ENCODE measurements at regions of chr17 and their contacts with region 1.

Region 1: GRCh38 chr17:82022981-82023374 is at the start of gene LRRC45:
- DNase-seq: peak; percentile 100
- ATAC-seq: peak; percentile 95
- H3K4me3 ChIP-seq: peak within 1 kb of the TSS; percentile 69 to 90
- H3K4me3 Mint-ChIP-seq: peak within 1 kb of the TSS; percentile 84
- H3K27ac ChIP-seq: peak within 1 kb of the TSS; percentile 42 to 60
- H3K27ac Mint-ChIP-seq: no peak within 1 kb of the TSS
- H3K4me1 ChIP-seq: peaks cover 31% of the 10 kb centered on the region
- H3K4me1 Mint-ChIP-seq: peaks cover 23% of the 10 kb centered on the region
- H3K27me3 ChIP-seq: no peaks in the 10 kb centered on the region
- H3K27me3 Mint-ChIP-seq: no peaks in the 10 kb centered on the region
- CTCF ChIP-seq: no peak
- total RNA-seq, gene LRRC45: 5.1 to 5.6 TPM

Region 2: DNA sequence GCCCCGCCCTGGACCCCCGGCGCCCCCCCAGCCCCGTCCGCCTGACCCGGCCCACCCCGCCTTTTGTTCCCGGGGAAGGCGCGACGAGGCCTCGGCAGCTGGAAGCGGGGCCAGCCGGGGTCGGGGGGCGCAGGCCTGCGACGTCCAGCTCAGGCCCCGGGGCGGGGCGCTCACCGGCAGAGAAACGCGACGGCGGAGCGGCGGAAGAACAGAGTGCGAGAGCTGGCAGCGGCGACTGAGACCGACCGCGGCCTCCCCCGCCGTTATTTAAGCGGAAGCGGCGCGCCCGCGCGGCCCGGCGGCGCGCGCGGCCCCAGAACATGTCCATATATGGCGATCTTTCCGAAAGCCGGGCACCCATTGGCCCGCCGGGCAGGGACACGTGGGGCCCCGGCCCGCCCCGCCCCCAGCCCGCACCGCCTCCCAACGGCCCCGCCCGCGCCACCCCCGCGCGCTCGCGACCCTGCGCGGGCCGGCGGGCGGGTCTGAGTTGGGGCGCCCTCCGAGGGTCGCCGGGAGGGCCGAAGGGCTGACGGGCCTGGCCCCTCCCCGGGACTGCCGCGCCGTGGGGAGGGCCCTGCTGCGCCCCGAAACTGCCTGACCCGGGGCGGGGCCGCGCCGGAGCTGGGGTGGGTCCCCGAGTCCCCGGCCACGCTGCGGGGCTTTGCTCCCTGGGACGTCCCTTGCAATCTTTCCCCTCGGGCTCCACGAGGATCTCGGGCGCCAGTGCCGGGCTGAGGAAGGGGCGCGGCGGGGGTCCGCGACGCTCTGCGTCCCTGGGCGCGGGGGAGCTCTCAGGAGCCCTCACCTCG is 510.2 kb before region 1 on chr17 and contains the start of gene ACTG1:
- CTCF ChIA-PET with region 1: no interaction called
- POLR2A ChIA-PET with region 1: no interaction called
- intact Hi-C with region 1: loop called in 1 of 2 experiments (anchors 10 kb)
- DNase-seq: peak; percentile 87 to 97 (median 92)
- ATAC-seq: peak; percentile 60
- H3K4me3 ChIP-seq: peak within 1 kb of the TSS; percentile 84 to 93
- H3K4me3 Mint-ChIP-seq: peak within 1 kb of the TSS; percentile 98
- H3K27ac ChIP-seq: peak within 1 kb of the TSS; percentile 56 to 93
- H3K27ac Mint-ChIP-seq: peak within 1 kb of the TSS; percentile 98
- H3K4me1 ChIP-seq: peaks cover 49% of the 10 kb centered on the region
- H3K4me1 Mint-ChIP-seq: peaks cover 57% of the 10 kb centered on the region
- H3K27me3 ChIP-seq: no peaks in the 10 kb centered on the region
- H3K27me3 Mint-ChIP-seq: no peaks in the 10 kb centered on the region
- CTCF ChIP-seq: no peak
- total RNA-seq, gene ACTG1: 1,370 to 1,375 TPM

Region 3: DNA sequence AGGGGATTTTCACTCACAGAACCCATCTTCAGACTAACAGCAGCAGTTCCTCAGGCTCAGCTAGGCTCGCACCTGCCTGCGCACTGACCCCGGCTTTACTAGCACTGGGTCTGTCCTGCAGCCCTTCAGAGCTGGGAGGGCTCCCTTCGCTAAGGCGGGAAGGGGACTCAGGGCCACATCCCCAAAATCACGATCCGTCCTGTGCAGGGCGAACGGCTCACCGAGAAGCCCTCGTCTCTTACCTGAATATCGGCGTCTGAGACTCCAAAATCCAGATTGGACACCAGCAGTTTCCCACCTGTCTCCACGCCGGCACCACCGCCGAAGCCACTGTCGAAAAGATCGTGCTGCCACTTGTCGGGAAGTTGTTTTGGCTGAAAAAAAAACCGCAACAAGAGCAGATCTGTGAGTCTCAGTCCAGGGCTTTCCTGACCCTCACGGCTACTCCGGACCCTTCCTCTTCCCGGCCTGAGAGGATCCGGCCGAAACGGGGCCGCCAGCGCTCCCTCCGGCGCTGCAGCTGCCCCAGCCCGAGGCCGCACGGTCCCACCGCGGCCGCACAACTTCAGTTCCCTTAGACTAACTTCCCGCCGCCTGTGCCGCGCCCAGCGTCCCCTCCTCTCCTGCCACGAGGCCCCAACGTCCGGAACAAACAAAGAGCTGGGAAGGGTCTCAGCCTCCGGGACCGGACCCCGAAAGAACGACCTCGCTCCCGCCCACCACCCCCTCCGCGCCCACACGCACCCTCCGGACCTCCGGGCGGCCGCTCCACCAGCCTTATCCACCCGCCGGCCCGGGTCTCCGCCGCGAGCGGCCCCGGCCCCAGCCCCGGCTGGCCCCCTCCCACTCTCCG is 132.3 kb before region 1 on chr17:
- CTCF ChIA-PET with region 1: no interaction called
- POLR2A ChIA-PET with region 1: no interaction called
- intact Hi-C with region 1: loop called in 1 of 2 experiments (anchors 1 kb)
- DNase-seq: peak in 3 of 9 experiments; percentile 26 to 52 (median 38)
- ATAC-seq: no peak
- H3K4me3 ChIP-seq: peak overlapping the region; percentile 51 to 53
- H3K4me3 Mint-ChIP-seq: peak overlapping the region; percentile 87
- H3K27ac ChIP-seq: peak overlapping the region; percentile 54 to 57
- H3K27ac Mint-ChIP-seq: peak overlapping the region; percentile 95
- H3K4me1 ChIP-seq: peaks cover 19% of the 10 kb centered on the region
- H3K4me1 Mint-ChIP-seq: peaks cover 23% of the 10 kb centered on the region
- H3K27me3 ChIP-seq: no peaks in the 10 kb centered on the region
- H3K27me3 Mint-ChIP-seq: no peaks in the 10 kb centered on the region
- CTCF ChIP-seq: no peak

Region 4: GRCh38 chr17:81977211-81978027 is 45.6 kb before region 1 on chr17 and contains the start of gene ASPSCR1:
- CTCF ChIA-PET with region 1: interaction called, 6 read pairs
- POLR2A ChIA-PET with region 1: interaction called, 4 read pairs
- intact Hi-C with region 1: loop called (anchors 1 kb)
- DNase-seq: peak; percentile 73 to 95 (median 90)
- ATAC-seq: peak; percentile 91
- H3K4me3 ChIP-seq: peak within 1 kb of the TSS; percentile 77 to 97
- H3K4me3 Mint-ChIP-seq: peak within 1 kb of the TSS; percentile 97
- H3K27ac ChIP-seq: peak within 1 kb of the TSS; percentile 72 to 83
- H3K27ac Mint-ChIP-seq: peak within 1 kb of the TSS; percentile 95
- H3K4me1 ChIP-seq: peaks cover 29% of the 10 kb centered on the region
- H3K4me1 Mint-ChIP-seq: peaks cover 33% of the 10 kb centered on the region
- H3K27me3 ChIP-seq: no peaks in the 10 kb centered on the region
- H3K27me3 Mint-ChIP-seq: no peaks in the 10 kb centered on the region
- CTCF ChIP-seq: no peak
- total RNA-seq, gene ASPSCR1: 18.6 to 19.5 TPM

Region 5: GRCh38 chr17:82098072-82098821 is 75.3 kb after region 1 on chr17 and contains the start of gene FASN:
- CTCF ChIA-PET with region 1: no interaction called
- POLR2A ChIA-PET with region 1: no interaction called
- intact Hi-C with region 1: loop called (anchors 1 kb)
- DNase-seq: peak; percentile 81 to 96 (median 92)
- ATAC-seq: peak; percentile 61
- H3K4me3 ChIP-seq: peak within 1 kb of the TSS; percentile 48 to 74
- H3K4me3 Mint-ChIP-seq: peak within 1 kb of the TSS; percentile 74
- H3K27ac ChIP-seq: peak within 1 kb of the TSS; percentile 81 to 87
- H3K27ac Mint-ChIP-seq: peak within 1 kb of the TSS; percentile 41
- H3K4me1 ChIP-seq: peaks cover 20% of the 10 kb centered on the region
- H3K4me1 Mint-ChIP-seq: peaks cover 5% of the 10 kb centered on the region
- H3K27me3 ChIP-seq: no peaks in the 10 kb centered on the region
- H3K27me3 Mint-ChIP-seq: no peaks in the 10 kb centered on the region
- CTCF ChIP-seq: peak; percentile 13
- total RNA-seq, gene FASN: 245 to 263 TPM

Region 6: DNA sequence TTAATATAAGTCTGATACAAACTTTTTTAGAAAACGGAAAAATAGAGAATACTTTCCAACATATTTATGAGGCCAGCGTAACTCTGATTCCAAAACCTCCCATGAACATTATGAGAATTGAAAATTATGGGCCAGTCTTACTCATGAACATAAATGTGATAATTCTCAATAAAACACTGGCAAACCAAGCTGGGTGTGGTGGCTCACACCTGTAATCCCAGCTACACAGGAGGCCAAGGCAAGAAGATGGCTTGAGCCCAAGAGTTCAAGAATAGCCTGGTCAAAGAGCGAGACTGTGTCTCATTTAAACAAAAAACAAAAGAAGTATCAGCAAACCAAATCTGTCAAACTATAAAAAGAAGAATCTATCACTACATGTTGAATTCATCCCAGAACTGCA is 141.9 kb after region 1 on chr17:
- CTCF ChIA-PET with region 1: no interaction called
- POLR2A ChIA-PET with region 1: no interaction called
- intact Hi-C with region 1: no loop called
- DNase-seq: no peak
- ATAC-seq: no peak
- H3K4me3 ChIP-seq: no peak overlapping the region
- H3K4me3 Mint-ChIP-seq: no peak overlapping the region
- H3K27ac ChIP-seq: no peak overlapping the region
- H3K27ac Mint-ChIP-seq: no peak overlapping the region
- H3K4me1 ChIP-seq: no peaks in the 10 kb centered on the region
- H3K4me1 Mint-ChIP-seq: no peaks in the 10 kb centered on the region
- H3K27me3 ChIP-seq: no peaks in the 10 kb centered on the region
- H3K27me3 Mint-ChIP-seq: no peaks in the 10 kb centered on the region
- CTCF ChIP-seq: no peak

Region 7: DNA sequence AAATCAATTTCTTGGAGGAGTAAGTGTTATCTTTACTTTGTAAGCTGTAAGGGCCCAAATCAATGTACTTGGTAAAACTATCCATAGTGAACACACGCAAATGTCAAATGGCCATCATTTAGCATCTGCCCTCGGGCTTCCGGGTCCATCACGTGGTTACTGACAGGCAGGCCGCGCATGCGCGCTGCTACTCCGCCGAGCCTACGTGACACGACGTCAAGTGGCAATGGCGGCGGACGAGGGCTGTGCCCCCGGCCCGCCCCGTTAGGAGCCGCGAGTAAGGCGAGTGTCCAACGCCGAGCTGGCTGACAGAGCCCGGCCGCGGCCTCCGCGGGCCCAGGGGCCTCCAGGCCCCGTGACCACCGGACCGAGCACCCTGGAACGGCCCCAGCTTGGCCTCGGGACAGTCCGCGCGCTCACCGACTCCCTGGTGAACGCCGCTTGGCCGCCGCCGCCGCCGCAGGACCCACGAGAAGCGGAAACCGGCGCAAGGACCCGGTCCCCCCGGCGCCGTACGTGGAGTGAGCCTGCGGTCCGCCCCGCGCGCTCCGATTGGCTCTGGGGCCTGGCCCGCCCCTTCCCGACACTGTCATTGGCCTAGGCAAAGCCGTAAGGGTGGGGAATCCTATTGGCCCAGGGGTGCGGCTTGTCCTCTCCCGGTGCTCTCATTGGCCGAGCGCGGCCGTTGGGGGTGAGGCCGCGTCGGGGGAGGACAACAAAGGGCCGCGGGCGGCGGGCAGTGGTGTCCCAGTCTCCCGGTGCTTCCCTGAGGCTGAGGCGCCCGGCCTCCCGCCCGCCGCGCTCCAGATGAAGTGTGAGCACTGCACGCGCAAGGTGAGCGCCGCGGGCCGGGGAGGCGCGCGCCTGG is 435.3 kb after region 1 on chr17 and contains the start of gene NARF:
- CTCF ChIA-PET with region 1: no interaction called
- POLR2A ChIA-PET with region 1: no interaction called
- intact Hi-C with region 1: loop called in 1 of 2 experiments (anchors 10 kb)
- DNase-seq: peak; percentile 89 to 98 (median 95)
- ATAC-seq: peak; percentile 97
- H3K4me3 ChIP-seq: peak within 1 kb of the TSS; percentile 67 to 76
- H3K4me3 Mint-ChIP-seq: peak within 1 kb of the TSS; percentile 87
- H3K27ac ChIP-seq: peak within 1 kb of the TSS; percentile 96 to 97
- H3K27ac Mint-ChIP-seq: peak within 1 kb of the TSS; percentile 97
- H3K4me1 ChIP-seq: peaks cover 17% of the 10 kb centered on the region
- H3K4me1 Mint-ChIP-seq: peaks cover 29% of the 10 kb centered on the region
- H3K27me3 ChIP-seq: no peaks in the 10 kb centered on the region
- H3K27me3 Mint-ChIP-seq: no peaks in the 10 kb centered on the region
- CTCF ChIP-seq: no peak
- total RNA-seq, gene NARF: 60.0 to 60.1 TPM